ENCODE measurements at regions of chr13 and their contacts with region 1.

Region 1: GRCh38 chr13:91406619-91407018 is 8.2 kb downstream of the GPC5 start:
- DNase-seq: peak; percentile 50
- CTCF ChIP-seq: peak; percentile 55

Region 2: DNA sequence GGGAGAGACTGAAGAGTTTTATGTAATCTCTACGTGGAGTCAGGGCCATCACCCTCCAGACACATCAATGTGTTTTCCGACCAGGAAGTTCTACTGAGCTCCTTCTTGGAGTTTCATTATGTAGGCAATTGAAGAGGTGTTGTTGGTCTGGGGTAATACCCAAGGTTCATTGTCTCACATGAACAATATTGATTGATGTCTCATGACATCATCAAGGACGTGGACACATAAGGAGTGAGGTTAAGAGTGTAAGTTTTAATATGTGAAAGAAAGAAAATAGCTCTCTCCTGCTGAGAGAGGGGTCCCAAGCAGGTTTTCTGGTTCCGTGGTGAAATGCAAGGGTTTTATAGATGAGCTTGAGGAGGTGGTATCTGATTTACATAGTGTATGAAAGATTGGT is 339.9 kb before region 1 on chr13:
- CTCF ChIA-PET with region 1: no interaction called
- POLR2A ChIA-PET with region 1: no interaction called
- DNase-seq: no peak
- CTCF ChIP-seq: no peak

Region 3: GRCh38 chr13:91133941-91134802 is 272.4 kb before region 1 on chr13:
- CTCF ChIA-PET with region 1: interaction called, 10 read pairs
- POLR2A ChIA-PET with region 1: no interaction called
- DNase-seq: peak; percentile 24
- CTCF ChIP-seq: peak; percentile 82

Region 4: DNA sequence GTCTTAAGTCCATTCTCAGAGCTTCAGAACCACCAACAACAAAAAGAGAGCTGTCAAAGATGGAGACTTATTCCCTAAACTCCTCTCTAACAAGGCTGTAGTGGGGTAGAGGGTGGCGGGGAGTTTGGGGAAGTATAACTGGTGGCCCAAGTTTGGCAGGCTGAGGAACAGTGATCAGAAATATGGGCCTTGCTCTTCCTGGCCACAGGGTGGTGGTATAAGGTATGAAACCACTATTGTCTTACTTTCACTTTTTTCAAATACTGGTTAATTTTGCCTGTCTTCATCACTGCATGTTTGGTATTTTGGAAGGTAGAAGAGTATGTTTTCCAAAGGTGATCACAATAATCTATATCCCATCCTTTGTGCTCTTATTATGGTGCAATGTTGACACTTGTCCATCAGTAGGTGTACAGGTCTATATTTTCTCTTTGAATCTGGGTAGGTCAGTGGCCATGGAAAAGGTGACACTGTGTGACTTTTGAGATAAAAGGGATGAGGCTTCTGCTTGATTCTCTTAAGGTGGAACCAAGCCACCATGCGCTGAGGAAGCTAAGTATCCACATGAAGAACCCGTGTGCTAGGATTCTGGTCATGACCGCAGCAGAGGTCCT is 31.4 kb before region 1 on chr13:
- CTCF ChIA-PET with region 1: interaction called, 15 read pairs
- POLR2A ChIA-PET with region 1: no interaction called
- DNase-seq: peak; percentile 57
- CTCF ChIP-seq: peak; percentile 61

Region 5: GRCh38 chr13:91417660-91418325 is 11.2 kb after region 1 on chr13:
- CTCF ChIA-PET with region 1: interaction called, 31 read pairs
- POLR2A ChIA-PET with region 1: no interaction called
- DNase-seq: no peak
- CTCF ChIP-seq: no peak